Cardiac septum (tissue), 1 donor: ENCODE measurements at regions of chr7 and their contacts with region 1.

Region 1: GRCh38 chr7:30026229-30027064 is at the start of gene FKBP14:
- DNase-seq: peak; percentile 97
- total RNA-seq, gene FKBP14: 13.8 TPM

Region 2: GRCh38 chr7:29859524-29860185 is 166.8 kb before region 1 on chr7:
- intact Hi-C with region 1: loop called (anchors 5 kb)
- DNase-seq: no peak

Region 3: DNA sequence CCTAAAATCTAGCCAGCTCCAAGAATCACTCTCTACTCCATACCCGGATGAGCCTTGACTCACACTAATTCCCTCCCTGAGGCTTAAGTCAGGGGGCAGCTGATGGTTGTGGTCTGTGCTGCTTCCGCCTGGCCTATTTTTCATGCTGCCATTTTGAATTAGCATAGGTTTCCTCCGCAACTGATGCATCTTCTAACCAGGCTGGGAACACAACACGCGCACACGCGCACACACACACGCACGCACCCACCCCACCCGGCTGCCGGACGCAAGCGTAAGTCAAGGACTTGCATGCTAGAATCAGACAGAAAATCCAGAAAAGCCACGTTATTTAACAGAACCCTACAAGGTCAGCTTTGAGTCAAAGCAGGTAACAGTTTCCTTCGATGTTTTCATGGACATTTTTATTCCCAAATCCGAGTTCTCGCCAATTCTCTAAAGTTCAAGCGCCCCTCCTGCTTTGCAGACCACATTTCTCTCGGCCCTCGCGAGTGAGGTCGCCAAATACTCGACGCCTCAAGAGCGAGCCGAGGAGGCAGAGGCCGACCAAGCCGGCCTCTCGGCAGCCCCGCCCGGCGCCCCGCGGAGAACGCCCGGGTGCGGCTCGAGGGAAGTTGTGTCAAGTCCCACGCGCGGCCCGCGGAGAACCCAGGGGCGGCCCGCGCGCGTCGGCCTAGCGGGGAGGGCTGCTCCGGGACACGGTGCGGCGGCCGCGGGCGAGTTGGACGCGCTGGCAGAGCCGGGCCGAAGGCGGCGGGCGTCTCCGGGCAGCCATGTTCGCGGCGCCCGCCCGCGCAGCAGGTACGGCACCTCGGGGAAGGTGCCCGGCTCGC is 37.8 kb before region 1 on chr7:
- intact Hi-C with region 1: loop called (anchors 2 kb)
- DNase-seq: peak; percentile 89

Region 4: DNA sequence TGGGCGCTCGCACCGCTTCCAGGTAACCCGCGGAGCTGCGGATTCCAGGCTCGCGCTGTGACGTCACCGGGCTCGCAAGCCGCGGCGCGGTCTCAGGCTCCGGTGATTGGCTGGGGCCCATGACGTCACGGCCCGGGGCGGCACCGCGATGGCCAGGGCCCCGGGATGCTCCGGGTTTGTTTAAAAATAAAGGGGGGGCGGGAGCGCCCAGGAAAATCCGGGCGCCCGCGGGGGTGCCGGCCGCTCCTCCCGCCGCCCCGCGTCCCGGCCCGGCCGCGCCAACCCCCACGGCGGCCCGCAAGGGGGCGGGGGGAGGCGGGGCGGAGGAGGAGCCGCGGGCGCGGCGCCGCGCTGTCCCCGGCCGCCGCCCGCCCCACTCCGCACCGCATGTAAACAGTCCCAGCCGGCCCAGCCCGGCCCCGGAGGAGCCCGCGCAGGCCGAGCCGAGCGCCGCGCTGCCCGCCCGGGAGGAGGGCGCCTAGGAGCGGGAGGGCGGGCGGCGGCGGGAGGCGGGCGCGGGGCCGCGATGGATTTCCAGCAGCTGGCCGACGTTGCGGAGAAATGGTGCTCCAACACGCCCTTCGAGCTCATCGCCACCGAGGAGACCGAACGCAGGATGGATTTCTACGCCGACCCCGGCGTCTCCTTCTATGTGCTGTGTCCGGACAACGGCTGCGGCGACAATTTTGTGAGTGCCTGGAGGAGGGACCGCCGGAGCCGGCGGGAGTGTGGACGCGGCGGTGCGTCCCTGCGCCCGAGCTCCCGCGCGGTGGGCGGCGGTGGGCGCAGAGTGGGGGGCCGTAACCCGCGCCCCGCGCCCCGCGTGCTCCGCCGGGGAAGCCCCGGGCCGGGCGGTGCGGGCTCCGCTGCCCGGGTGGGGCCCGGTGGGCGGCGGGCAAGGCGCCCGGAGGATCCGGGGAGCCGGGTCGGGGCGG is 108.4 kb after region 1 on chr7 and contains the start of gene MTURN:
- intact Hi-C with region 1: loop called (anchors 5 kb)
- DNase-seq: peak; percentile 94
- total RNA-seq, gene MTURN: 49.3 TPM

Region 5: DNA sequence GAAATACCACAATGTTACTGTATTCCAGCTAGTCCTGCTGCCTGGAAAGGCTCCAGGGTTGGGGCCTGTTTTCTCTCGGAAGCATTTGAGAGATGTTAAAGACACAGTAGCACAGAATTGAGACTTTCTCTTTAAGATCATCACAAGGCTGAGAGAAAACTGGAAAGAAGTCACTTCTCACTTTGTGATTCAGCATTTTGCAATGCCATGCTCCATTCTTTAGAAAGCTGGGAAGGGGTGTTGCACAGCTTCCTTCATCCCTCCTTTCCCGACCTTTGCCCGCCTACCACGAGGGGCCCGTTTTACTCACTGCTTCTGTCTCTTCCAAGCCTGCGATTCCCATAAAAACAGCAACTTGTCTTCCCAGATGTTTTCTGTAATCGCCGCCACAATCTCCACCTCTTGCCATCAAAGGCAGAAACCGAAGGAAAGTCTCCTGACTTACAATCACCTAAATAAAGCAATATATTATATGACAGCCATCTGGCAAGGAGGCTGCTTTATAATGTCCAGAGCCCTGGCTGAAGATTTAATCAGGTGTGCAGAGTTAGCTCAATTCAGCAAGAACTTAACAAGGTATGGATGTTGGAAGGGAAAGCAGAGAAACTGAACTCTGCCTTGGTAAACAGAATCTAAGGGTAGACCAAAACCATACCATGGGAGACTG is 433.3 kb after region 1 on chr7:
- intact Hi-C with region 1: no loop called
- DNase-seq: no peak